Heart left ventricle (tissue), 16 donors: ENCODE measurements at regions of chr19 and their contacts with region 1.

Region 1: DNA sequence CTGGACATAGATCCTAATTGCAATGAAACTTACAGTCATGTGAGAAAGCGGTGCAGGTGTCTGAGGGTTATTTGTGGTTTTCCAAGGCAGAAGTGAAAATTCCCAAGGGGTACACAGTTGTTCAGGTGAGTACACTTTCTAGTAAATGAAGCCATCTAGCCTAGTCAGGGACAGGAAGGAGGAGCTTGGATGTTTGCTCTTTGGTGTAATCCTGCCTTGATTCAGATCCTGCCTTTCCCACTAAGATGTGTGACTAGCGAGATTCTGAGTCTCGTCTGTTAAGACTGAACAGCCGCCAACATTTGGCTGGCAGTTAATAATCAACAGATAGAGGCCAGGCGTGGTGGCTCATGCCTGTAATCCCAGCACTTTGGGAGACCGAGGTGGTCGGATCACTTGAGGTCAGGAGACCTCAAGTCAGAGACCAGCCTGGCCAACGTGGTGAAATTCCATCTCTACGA is 2.5 kb downstream of the RPS9 start:
- DNase-seq: no peak
- ATAC-seq: no peak
- H3K4me3 ChIP-seq: peak overlapping the region in 3 of 12 donors; percentile 11 to 79 (median 20)
- H3K27ac ChIP-seq: peak overlapping the region in 2 of 12 donors; percentile 20 to 91
- H3K4me1 ChIP-seq: peaks cover 19 to 77% (median 52%) of the 10 kb centered on the region in 12 donors
- H3K27me3 ChIP-seq: no peaks in the 10 kb centered on the region
- CTCF ChIP-seq: no peak
- POLR2A ChIP-seq: no peak

Region 2: DNA sequence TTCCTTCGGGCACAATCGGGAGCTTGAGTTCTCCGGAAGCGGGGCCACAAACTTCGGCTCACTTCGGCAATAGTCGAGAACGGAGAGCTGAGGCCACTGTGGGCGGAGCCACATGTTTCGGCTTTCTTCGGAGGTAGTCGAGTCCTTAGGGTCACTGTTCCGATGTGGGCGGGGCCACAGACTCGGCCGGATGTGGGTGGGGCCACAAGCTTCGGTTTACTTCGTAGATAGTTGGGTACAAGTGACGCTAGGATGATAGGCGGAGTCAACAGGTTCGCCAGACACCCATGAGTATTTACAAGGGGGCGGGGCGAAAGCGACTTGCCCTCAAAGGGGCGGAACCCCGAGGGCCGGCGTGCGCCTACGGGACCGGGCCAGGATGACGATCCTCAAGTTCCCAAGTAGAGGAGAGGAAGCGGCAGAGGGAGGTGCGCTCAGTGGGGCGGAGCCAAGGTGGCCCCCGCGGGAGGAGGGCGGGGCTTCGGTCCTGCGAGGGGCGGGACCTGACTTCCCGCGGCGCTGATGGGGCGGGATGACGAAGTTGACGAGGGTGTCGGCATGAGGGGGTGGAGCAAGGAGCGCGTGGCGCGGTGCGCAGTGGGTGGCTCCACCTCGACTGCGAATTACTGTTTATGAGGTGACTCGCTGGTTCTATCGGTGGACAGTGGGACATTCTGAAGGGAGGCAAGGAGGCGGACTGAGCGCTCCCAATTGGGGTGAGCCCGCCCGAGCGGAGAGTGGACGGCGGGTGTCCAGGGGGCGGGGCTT is 13.3 kb before region 1 on chr19:
- intact Hi-C with region 1: loop called in 3 of 10 experiments (anchors 1 kb)
- DNase-seq: peak; percentile 100
- ATAC-seq: peak; percentile 79 to 84 (median 82)
- H3K4me3 ChIP-seq: peak overlapping the region; percentile 68 to 92 (median 86)
- H3K27ac ChIP-seq: peak overlapping the region; percentile 88 to 100 (median 98)
- H3K4me1 ChIP-seq: peaks cover 0 to 23% (median 17%) of the 10 kb centered on the region in 12 donors
- H3K27me3 ChIP-seq: no peaks in the 10 kb centered on the region
- CTCF ChIP-seq: no peak
- POLR2A ChIP-seq: peak in 1 of 2 donors; percentile 44

Region 3: GRCh38 chr19:54281007-54281728 is 78.0 kb after region 1 on chr19 and contains the start of gene LILRB2:
- intact Hi-C with region 1: no loop called
- DNase-seq: no peak
- ATAC-seq: peak; percentile 32 to 47 (median 34)
- H3K4me3 ChIP-seq: peak within 1 kb of the TSS in 8 of 12 donors; percentile 11 to 59 (median 24)
- H3K27ac ChIP-seq: peak within 1 kb of the TSS in 5 of 12 donors; percentile 15 to 91 (median 43)
- H3K4me1 ChIP-seq: peaks cover 0 to 13% (median 0%) of the 10 kb centered on the region in 12 donors
- H3K27me3 ChIP-seq: peaks cover 0 to 54% (median 3%) of the 10 kb centered on the region in 9 donors
- CTCF ChIP-seq: no peak
- POLR2A ChIP-seq: no peak
- total RNA-seq, gene LILRB2: 0.83 to 43.6 (median 1.7) TPM